ENCODE measurements at regions of chr13 and their contacts with region 1.

Region 1: DNA sequence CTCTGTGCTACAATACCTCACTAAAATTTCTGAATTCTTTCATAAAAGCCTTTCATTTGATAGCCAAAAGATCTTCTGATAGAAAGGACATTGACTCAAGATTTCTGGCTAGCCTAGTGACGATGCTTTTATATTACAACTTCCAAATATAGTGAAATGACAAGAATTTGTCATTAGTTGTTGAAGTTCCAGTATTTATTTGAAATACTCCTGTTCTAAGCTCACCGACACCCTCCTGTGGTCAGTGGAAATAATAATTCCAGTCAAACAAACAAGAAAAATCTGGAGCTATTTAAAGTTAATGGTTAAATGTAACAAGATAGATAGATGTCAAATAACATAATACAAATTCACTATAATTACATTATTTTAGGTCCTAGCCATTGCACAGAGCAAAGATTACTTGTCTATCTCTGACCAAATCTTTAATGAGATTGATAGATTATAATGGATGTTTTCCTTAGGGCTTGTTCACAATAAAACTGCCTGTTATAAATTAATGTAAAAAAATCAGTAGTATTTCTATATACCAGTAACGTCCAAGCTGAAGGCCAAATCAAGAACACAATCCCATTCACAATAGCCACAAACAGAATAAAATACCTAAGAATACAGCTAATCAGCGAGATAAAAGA is 195.5 kb downstream of the RGCC start:
- DNase-seq: peak; percentile 42
- H3K4me3 ChIP-seq: no peak overlapping the region
- H3K27ac ChIP-seq: no peak overlapping the region
- H3K27me3 ChIP-seq: no peaks in the 10 kb centered on the region
- CTCF ChIP-seq: peak; percentile 60

Region 2: GRCh38 chr13:41384755-41385503 is 267.9 kb before region 1 on chr13:
- CTCF ChIA-PET with region 1: interaction called, 20 read pairs
- POLR2A ChIA-PET with region 1: no interaction called
- DNase-seq: no peak
- H3K4me3 ChIP-seq: no peak overlapping the region
- H3K27ac ChIP-seq: no peak overlapping the region
- H3K27me3 ChIP-seq: peaks cover 2% of the 10 kb centered on the region
- CTCF ChIP-seq: peak; percentile 63

Region 3: DNA sequence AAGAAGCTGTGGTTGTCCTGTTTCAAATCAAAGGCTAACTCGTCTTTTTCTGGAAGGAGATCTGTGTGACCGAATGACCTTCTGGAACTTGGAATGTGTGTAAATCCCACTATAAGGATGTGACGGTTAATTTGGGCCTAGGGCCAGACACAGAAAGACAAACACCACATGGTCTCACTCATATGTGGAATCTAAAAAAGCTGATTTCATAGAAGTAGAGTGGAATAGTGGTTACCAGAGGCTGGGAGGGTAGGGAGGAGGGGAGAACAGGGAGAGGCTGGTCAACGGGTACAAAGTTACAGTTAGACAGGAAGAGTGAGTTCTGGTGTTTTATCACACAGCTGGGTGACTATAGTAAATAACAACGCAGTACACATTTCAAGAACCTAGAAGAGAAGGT is 234.8 kb before region 1 on chr13:
- CTCF ChIA-PET with region 1: interaction called, 16 read pairs
- POLR2A ChIA-PET with region 1: no interaction called
- DNase-seq: peak; percentile 36
- H3K4me3 ChIP-seq: no peak overlapping the region
- H3K27ac ChIP-seq: no peak overlapping the region
- H3K27me3 ChIP-seq: no peaks in the 10 kb centered on the region
- CTCF ChIP-seq: no peak

Region 4: GRCh38 chr13:41470196-41470595 is 182.6 kb before region 1 on chr13:
- CTCF ChIA-PET with region 1: interaction called, 6 read pairs
- POLR2A ChIA-PET with region 1: interaction called, 10 read pairs
- DNase-seq: no peak
- H3K4me3 ChIP-seq: no peak overlapping the region
- H3K27ac ChIP-seq: no peak overlapping the region
- H3K27me3 ChIP-seq: no peaks in the 10 kb centered on the region
- CTCF ChIP-seq: no peak

Region 5: DNA sequence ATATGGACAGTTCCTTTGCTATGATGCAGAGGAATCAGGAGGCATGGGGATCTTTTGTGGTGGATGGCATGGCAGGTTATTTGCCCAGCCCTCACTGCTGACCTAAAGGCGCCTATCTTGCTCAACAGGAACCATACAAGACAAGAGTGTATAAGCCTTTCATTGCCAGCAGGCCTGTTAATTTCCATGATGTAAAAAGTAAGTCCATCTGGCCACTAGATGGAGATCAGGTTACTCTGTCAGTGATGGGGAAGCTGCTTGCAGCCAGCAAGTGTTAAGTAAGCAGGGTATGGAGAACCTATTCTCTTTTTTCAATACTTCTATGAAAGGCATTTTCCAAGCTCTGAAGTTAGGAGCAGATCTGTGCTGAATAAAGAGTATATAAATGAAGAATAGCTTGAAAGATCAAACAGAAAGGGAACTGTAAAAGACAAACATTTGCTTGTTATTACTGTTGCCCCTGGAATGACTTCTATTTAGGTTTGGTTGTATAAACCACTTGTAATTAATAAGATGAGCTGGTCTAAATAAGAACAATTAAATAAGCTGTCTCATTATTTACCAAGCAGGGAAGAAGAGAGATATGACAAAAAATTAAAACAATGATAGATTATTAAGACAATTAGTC is 15.4 kb after region 1 on chr13:
- CTCF ChIA-PET with region 1: interaction called, 17 read pairs
- POLR2A ChIA-PET with region 1: no interaction called
- DNase-seq: peak; percentile 85
- H3K4me3 ChIP-seq: no peak overlapping the region
- H3K27ac ChIP-seq: no peak overlapping the region
- H3K27me3 ChIP-seq: no peaks in the 10 kb centered on the region
- CTCF ChIP-seq: peak; percentile 85